GM10248 (cell line): ENCODE measurements at regions of chr6 and their contacts with region 1.

Region 1: GRCh38 chr6:138752017-138752416 is 21.6 kb upstream of the CCDC28A start:
- DNase-seq: no peak
- CTCF ChIP-seq: no peak

Region 2: GRCh38 chr6:138765896-138766655 is 14.1 kb after region 1 on chr6:
- CTCF ChIA-PET with region 1: interaction called, 32 read pairs
- POLR2A ChIA-PET with region 1: no interaction called
- DNase-seq: peak; percentile 43
- CTCF ChIP-seq: peak; percentile 60